ENCODE measurements at regions of chr15 and their contacts with region 1.

Region 1: DNA sequence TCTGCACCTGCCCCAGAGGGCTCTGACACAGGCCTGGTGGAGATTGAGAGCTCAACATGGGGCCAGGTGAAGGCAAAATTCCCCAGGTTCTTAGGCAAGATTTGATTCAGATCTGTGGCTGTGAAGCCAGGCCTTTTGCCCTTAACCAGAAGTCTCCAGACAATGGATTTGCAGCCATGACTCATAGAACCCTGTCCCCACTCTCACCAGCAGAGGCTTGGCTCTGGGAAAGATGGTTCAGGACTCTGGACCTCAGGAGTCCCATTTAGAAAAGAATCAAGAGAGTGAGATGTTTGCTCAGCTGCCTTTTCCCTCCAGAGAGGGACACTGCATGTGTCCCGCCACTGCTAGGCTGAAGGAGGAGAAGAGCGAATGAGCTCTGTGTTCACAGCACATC is 361.4 kb upstream of the ICE2 start:
- DNase-seq: no peak
- ATAC-seq: peak; percentile 1
- H3K4me3 ChIP-seq: peak overlapping the region; percentile 51
- H3K4me3 Mint-ChIP-seq: peak overlapping the region; percentile 75 to 90 (median 82)
- H3K27ac ChIP-seq: peak overlapping the region; percentile 68
- H3K27ac Mint-ChIP-seq: peak overlapping the region; percentile 89 to 97 (median 96)
- H3K4me1 ChIP-seq: peaks cover 61 to 62% of the 10 kb centered on the region in 2 donors
- H3K4me1 Mint-ChIP-seq: peaks cover 50 to 96% (median 77%) of the 10 kb centered on the region in 7 donors
- H3K27me3 ChIP-seq: no peaks in the 10 kb centered on the region
- H3K27me3 Mint-ChIP-seq: peaks cover 0 to 9% (median 0%) of the 10 kb centered on the region in 5 donors

Region 2: GRCh38 chr15:60397772-60398445 is 442.4 kb before region 1 on chr15 and contains the start of gene ANXA2:
- CTCF ChIA-PET with region 1: no interaction called
- POLR2A ChIA-PET with region 1: interaction called, 3 read pairs
- intact Hi-C with region 1: loop called in 1 of 2 experiments (anchors 5 kb)
- DNase-seq: peak; percentile 49 to 85 (median 62)
- ATAC-seq: peak; percentile 81
- H3K4me3 ChIP-seq: peak within 1 kb of the TSS; percentile 72
- H3K4me3 Mint-ChIP-seq: peak within 1 kb of the TSS; percentile 83 to 98 (median 87)
- H3K27ac ChIP-seq: peak within 1 kb of the TSS; percentile 61
- H3K27ac Mint-ChIP-seq: peak within 1 kb of the TSS; percentile 87 to 98 (median 95)
- H3K4me1 ChIP-seq: peaks cover 6 to 32% of the 10 kb centered on the region in 2 donors
- H3K4me1 Mint-ChIP-seq: peaks cover 10 to 67% (median 33%) of the 10 kb centered on the region in 7 donors
- H3K27me3 ChIP-seq: no peaks in the 10 kb centered on the region
- H3K27me3 Mint-ChIP-seq: peaks cover 0 to 7% (median 0%) of the 10 kb centered on the region in 5 donors
- total RNA-seq, gene ANXA2: 28.8 to 377 (median 42.4) TPM

Region 3: GRCh38 chr15:60580650-60581376 is 259.5 kb before region 1 on chr15:
- CTCF ChIA-PET with region 1: interaction called, 15 read pairs
- POLR2A ChIA-PET with region 1: interaction called, 7 read pairs
- intact Hi-C with region 1: loop called (anchors 1 to 5 kb)
- DNase-seq: peak in 7 of 9 donors; percentile 72 to 90 (median 86)
- ATAC-seq: peak; percentile 91
- H3K4me3 ChIP-seq: peak overlapping the region; percentile 33
- H3K4me3 Mint-ChIP-seq: peak overlapping the region; percentile 72 to 88 (median 85)
- H3K27ac ChIP-seq: peak overlapping the region; percentile 82
- H3K27ac Mint-ChIP-seq: peak overlapping the region; percentile 90 to 98 (median 96)
- H3K4me1 ChIP-seq: peaks cover 78 to 80% of the 10 kb centered on the region in 2 donors
- H3K4me1 Mint-ChIP-seq: peaks cover 58 to 99% (median 91%) of the 10 kb centered on the region in 7 donors
- H3K27me3 ChIP-seq: no peaks in the 10 kb centered on the region
- H3K27me3 Mint-ChIP-seq: no peaks in the 10 kb centered on the region

Region 4: DNA sequence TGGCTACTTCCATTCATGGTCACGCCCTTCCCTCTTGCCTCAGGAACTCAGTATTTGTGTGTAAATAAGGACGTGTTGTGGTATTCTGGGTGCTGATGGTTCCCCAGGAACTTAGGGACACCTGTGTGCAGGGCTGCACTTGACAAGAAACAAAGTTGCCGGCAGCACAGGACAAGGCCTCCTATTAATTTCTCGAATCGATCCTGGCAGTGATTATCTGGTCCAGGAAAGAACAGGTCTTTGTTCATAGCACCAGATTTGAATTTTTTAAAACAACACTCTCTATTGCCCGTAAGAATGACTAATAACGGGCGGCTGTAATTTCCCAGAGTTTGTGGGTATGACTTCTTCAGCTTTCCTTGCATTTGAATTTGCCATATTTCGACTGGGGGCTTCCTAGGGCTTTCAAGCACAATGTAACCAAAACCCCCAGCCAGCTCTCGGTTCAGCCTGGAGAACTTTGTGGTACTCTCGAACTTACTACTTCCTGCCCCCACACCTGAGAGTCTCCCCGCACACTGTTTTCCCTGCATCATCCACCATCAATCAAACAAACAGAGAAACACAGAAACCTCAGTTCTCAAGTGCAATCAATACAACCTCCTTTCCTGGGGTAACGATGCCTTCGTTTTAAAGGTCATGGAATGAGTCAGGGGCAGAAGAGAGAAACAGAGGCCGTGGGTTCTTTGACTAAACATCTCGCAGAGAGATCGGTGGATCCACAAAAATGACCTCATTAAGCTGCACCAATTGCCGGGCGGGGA is 119.6 kb before region 1 on chr15:
- CTCF ChIA-PET with region 1: interaction called, 3 read pairs
- POLR2A ChIA-PET with region 1: interaction called, 10 read pairs
- intact Hi-C with region 1: loop called (anchors 2 to 5 kb)
- DNase-seq: peak in 8 of 9 donors; percentile 31 to 68 (median 44)
- ATAC-seq: peak; percentile 81
- H3K4me3 ChIP-seq: peak overlapping the region; percentile 47
- H3K4me3 Mint-ChIP-seq: peak overlapping the region; percentile 64 to 84 (median 80)
- H3K27ac ChIP-seq: peak overlapping the region; percentile 6
- H3K27ac Mint-ChIP-seq: peak overlapping the region; percentile 63 to 92 (median 77)
- H3K4me1 ChIP-seq: peaks cover 27% of the 10 kb centered on the region in 2 donors
- H3K4me1 Mint-ChIP-seq: peaks cover 29 to 65% (median 53%) of the 10 kb centered on the region in 7 donors
- H3K27me3 ChIP-seq: no peaks in the 10 kb centered on the region
- H3K27me3 Mint-ChIP-seq: no peaks in the 10 kb centered on the region

Region 5: GRCh38 chr15:60819860-60820259 is 20.4 kb before region 1 on chr15:
- CTCF ChIA-PET with region 1: no interaction called
- POLR2A ChIA-PET with region 1: interaction called, 5 read pairs
- intact Hi-C with region 1: loop called in 1 of 2 experiments (anchors 2 kb)
- DNase-seq: no peak
- ATAC-seq: peak; percentile 37
- H3K4me3 ChIP-seq: no peak overlapping the region
- H3K4me3 Mint-ChIP-seq: peak overlapping the region in 7 of 10 donors; percentile 9 to 68 (median 31)
- H3K27ac ChIP-seq: no peak overlapping the region
- H3K27ac Mint-ChIP-seq: peak overlapping the region in 6 of 9 donors; percentile 42 to 88 (median 57)
- H3K4me1 ChIP-seq: no peaks in the 10 kb centered on the region
- H3K4me1 Mint-ChIP-seq: peaks cover 0 to 42% (median 28%) of the 10 kb centered on the region in 7 donors
- H3K27me3 ChIP-seq: no peaks in the 10 kb centered on the region
- H3K27me3 Mint-ChIP-seq: peaks cover 0 to 2% (median 0%) of the 10 kb centered on the region in 5 donors

Region 6: GRCh38 chr15:60899322-60899966 is 59.1 kb after region 1 on chr15:
- CTCF ChIA-PET with region 1: no interaction called
- POLR2A ChIA-PET with region 1: no interaction called
- intact Hi-C with region 1: loop called (anchors 1 to 2 kb)
- DNase-seq: peak in 2 of 9 donors; percentile 1 to 36
- ATAC-seq: peak; percentile 81
- H3K4me3 ChIP-seq: no peak overlapping the region
- H3K4me3 Mint-ChIP-seq: peak overlapping the region in 1 of 10 donors; percentile 63
- H3K27ac ChIP-seq: no peak overlapping the region
- H3K27ac Mint-ChIP-seq: peak overlapping the region in 1 of 9 donors; percentile 59
- H3K4me1 ChIP-seq: no peaks in the 10 kb centered on the region
- H3K4me1 Mint-ChIP-seq: peaks cover 0 to 50% (median 0%) of the 10 kb centered on the region in 7 donors
- H3K27me3 ChIP-seq: no peaks in the 10 kb centered on the region
- H3K27me3 Mint-ChIP-seq: peaks cover 0 to 11% (median 0%) of the 10 kb centered on the region in 5 donors

Region 7: GRCh38 chr15:60982249-60982910 is 142.1 kb after region 1 on chr15:
- CTCF ChIA-PET with region 1: no interaction called
- POLR2A ChIA-PET with region 1: no interaction called
- intact Hi-C with region 1: no loop called
- DNase-seq: no peak
- ATAC-seq: no peak
- H3K4me3 ChIP-seq: no peak overlapping the region
- H3K4me3 Mint-ChIP-seq: no peak overlapping the region
- H3K27ac ChIP-seq: no peak overlapping the region
- H3K27ac Mint-ChIP-seq: no peak overlapping the region
- H3K4me1 ChIP-seq: no peaks in the 10 kb centered on the region
- H3K4me1 Mint-ChIP-seq: no peaks in the 10 kb centered on the region
- H3K27me3 ChIP-seq: no peaks in the 10 kb centered on the region
- H3K27me3 Mint-ChIP-seq: peaks cover 25 to 54% (median 35%) of the 10 kb centered on the region in 5 donors